ENCODE measurements at regions of chr2 and their contacts with region 1.

Region 1: DNA sequence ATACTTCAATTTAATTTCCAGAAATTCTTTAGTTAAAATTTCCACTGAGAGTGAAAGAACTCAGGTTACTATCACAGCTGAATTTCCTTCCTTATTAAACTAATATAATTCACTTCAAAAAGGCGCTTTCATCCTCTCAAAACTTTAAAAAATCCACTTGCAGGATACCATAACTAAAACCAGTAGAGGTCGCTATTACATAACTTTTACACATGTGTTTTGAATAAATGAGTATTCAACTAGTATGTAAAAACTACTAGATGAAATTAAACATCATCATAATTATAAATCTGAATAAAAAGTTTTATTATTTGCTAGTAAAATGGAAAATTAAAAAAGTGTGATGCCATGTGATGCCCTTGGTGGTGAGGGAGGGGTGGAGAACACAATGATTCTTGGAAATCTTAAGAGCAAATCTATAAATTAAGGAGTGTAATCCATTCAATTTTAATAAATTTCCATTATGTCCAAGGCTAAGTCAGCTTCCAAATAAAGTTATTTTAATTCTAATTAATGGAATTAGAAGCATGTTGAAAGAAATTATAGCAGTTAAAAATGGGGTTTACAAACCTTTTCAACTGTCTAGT is 61.4 kb downstream of the SOS1 start:
- DNase-seq: no peak
- ATAC-seq: no peak
- H3K4me3 ChIP-seq: no peak overlapping the region
- H3K27ac ChIP-seq: peak overlapping the region in 1 of 4 donors; percentile 34
- H3K4me1 ChIP-seq: peaks cover 0 to 7% of the 10 kb centered on the region in 2 donors
- H3K27me3 ChIP-seq: no peaks in the 10 kb centered on the region
- CTCF ChIP-seq: peak; percentile 52 to 80 (median 75)
- POLR2A ChIP-seq: no peak

Region 2: DNA sequence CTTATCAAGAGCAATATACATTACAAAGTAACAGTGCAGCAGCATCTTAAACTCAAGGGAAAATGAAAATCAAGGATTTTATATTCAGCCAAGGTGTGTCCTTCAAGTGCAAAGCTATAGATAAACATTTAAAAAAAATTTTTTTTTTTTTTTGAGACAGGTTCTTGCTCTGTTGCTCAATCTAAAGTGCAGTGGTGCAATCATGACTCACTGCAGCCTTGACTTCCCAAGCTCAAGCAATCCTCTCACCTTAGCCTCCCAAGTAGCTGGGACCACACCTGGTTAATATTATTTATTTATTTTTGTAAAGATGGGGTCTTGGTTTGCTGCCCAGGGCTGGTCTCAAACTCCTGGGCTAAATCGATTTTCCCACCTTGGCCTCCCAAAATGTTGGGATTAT is 175.3 kb after region 1 on chr2:
- in situ Hi-C with region 1: loop called (anchors 5 to 10 kb)
- intact Hi-C with region 1: no loop called
- DNase-seq: no peak
- ATAC-seq: no peak
- H3K4me3 ChIP-seq: no peak overlapping the region
- H3K27ac ChIP-seq: no peak overlapping the region
- H3K4me1 ChIP-seq: peaks cover under 1 to 4% of the 10 kb centered on the region in 2 donors
- H3K27me3 ChIP-seq: no peaks in the 10 kb centered on the region
- CTCF ChIP-seq: no peak
- POLR2A ChIP-seq: no peak